BJ (cell line): ENCODE measurements at regions of chr1 and their contacts with region 1.

Region 1: DNA sequence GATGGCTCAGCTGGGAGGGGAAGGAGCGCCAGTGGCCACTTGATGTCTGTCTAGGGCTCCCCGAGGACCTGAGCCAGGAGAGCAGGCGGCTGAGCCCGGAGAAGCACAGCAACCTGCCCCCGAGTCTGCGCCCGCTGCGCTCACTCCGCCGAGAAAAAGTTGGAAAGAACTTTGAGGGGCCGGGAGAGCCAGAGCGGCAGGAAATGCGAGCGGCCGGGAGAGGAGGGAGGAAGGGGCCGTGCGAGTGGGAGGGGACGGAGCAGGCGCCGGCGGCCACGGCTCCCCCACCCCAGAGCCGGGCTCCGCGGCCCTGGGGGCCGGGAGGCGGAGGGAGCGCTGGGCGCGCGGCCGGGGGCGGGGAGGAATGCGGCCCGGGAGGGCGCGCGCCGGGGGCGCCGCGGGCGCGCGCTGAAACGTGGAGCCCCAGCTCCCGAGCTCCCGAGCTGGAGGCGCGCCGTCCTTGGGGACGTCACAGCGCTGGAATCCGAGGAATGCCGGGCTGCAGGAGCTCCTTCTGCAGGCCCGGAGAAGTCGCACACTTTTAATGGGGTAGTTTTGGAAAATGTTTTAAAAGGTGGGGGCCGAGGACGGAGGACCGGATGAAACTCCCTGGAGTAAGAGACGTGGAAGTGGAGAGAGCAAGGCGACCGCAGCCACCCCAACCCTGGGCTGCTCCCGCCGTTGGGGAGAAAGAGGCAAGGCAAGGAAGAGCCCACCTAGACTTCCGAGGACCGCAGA is at the start of gene PTPN14:
- DNase-seq: peak; percentile 77
- H3K4me3 ChIP-seq: peak within 1 kb of the TSS; percentile 93
- H3K27me3 ChIP-seq: no peaks in the 10 kb centered on the region
- CTCF ChIP-seq: peak; percentile 60
- polyA plus RNA-seq, gene PTPN14: 23.7 and 29.4 TPM in 2 replicates

Region 2: DNA sequence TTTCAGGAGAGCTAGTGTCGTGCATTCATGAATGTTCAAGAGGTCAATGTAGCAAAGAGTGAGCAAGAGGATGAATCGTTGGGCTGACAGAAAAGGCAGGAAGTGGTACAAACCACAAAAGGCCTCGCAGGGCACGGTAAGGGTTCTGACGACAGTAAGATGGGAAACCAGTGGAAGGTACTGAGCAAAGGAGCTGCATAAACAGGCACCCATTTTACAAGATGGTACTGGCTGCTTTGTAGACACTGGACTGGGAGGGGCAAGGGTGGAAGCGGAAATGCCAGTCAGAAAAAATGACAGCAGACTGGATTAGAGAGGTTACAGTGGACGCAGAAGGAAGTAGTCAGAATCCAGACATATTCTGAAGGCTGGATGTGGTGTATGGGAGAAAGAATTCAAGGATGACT is 123.7 kb before region 1 on chr1:
- CTCF ChIA-PET with region 1: no interaction called
- POLR2A ChIA-PET with region 1: no interaction called
- DNase-seq: peak; percentile 73
- H3K4me3 ChIP-seq: no peak overlapping the region
- H3K27me3 ChIP-seq: no peaks in the 10 kb centered on the region
- CTCF ChIP-seq: no peak

Region 3: GRCh38 chr1:214538496-214538895 is 13.1 kb before region 1 on chr1:
- CTCF ChIA-PET with region 1: interaction called, 21 read pairs
- POLR2A ChIA-PET with region 1: no interaction called
- DNase-seq: no peak
- H3K4me3 ChIP-seq: no peak overlapping the region
- H3K27me3 ChIP-seq: no peaks in the 10 kb centered on the region
- CTCF ChIP-seq: no peak

Region 4: GRCh38 chr1:214584805-214585766 is 33.5 kb after region 1 on chr1:
- CTCF ChIA-PET with region 1: interaction called, 14 read pairs
- POLR2A ChIA-PET with region 1: interaction called, 7 read pairs
- DNase-seq: no peak
- H3K4me3 ChIP-seq: no peak overlapping the region
- H3K27me3 ChIP-seq: no peaks in the 10 kb centered on the region
- CTCF ChIP-seq: peak; percentile 75